ENCODE measurements at regions of chr1 and their contacts with region 1.

Region 1: GRCh38 chr1:40709100-40709801 is 17.7 kb downstream of the NFYC start:
- DNase-seq: peak; percentile 25 to 96 (median 84)
- H3K4me3 ChIP-seq: peak overlapping the region; percentile 36 to 79 (median 63)
- H3K27ac ChIP-seq: peak overlapping the region in 55 of 59 donors; percentile 5 to 87 (median 74)
- H3K27me3 ChIP-seq: no peaks in the 10 kb centered on the region
- CTCF ChIP-seq: peak in 5 of 56 donors; percentile 9 to 15 (median 13)

Region 2: DNA sequence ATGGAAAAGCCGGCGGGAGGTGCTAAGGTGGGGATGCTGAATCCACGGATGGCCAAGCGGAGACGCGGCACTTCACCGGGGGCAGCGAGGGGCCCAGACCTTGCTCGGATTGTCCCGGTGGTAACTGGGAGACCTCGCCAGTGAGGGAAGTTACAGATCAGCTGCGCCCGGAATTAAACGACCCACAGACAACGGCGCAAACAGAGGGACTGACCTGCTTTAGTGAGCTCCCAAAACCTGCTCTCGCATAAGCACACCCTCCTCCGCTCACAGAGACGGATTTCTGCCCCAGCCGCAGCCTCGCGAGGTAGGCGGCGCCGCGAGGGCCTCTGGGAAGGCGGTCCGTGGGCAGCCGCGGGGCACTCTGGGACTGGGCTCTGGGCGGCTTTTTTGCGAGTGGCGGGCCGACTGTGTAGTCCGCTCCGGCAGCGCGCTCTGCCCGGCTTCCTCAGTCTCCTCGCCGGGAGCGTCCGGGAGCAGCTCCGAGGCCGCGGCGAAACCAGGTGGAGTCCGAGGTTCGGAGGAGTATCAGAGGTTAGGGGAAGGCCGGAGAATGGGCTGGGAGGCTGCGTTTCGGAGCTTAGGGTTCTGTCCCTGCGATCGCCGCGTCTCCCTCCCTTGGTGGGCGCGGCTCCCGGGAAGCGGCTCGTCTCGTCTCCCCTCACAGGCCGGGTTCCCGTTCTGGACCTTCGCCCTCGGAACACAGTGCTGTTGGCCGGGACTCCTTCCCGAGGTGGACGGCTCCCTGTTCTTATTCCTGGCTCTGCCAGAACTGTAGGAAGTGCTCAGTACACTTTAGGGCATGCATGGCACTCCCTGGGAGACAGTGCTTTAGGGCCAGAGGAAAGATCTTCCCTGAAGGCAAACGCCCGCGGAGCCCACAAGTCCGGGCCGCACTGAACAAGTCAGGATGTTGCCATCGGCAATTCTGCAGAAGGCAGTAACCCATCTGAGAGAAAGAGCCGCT is 200.6 kb before region 1 on chr1 and contains the start of gene EXO5:
- intact Hi-C with region 1: no loop called
- DNase-seq: peak; percentile 55 to 89 (median 72)
- H3K4me3 ChIP-seq: peak within 1 kb of the TSS; percentile 55 to 97 (median 83)
- H3K27ac ChIP-seq: peak within 1 kb of the TSS in 39 of 59 donors; percentile 1 to 87 (median 51)
- H3K27me3 ChIP-seq: no peaks in the 10 kb centered on the region
- CTCF ChIP-seq: peak in 29 of 56 donors; percentile 8 to 52 (median 32)
- total RNA-seq, gene EXO5: 4.9 to 15.6 (median 9.1) TPM

Region 3: GRCh38 chr1:40691538-40692428 is 17.5 kb before region 1 on chr1 and contains the start of gene NFYC:
- intact Hi-C with region 1: loop called (anchors 2 kb)
- DNase-seq: peak; percentile 91 to 97 (median 94)
- H3K4me3 ChIP-seq: peak within 1 kb of the TSS; percentile 70 to 99 (median 91)
- H3K27ac ChIP-seq: peak within 1 kb of the TSS; percentile 96 to 100 (median 100)
- H3K27me3 ChIP-seq: no peaks in the 10 kb centered on the region
- CTCF ChIP-seq: peak in 29 of 56 donors; percentile 7 to 59 (median 28)
- total RNA-seq, gene NFYC: 44.5 to 77.9 (median 59.4) TPM

Region 4: GRCh38 chr1:40774266-40774998 is 65.2 kb after region 1 on chr1:
- intact Hi-C with region 1: no loop called
- DNase-seq: peak in 4 of 10 donors; percentile 38 to 51 (median 45)
- H3K4me3 ChIP-seq: no peak overlapping the region
- H3K27ac ChIP-seq: no peak overlapping the region
- H3K27me3 ChIP-seq: no peaks in the 10 kb centered on the region
- CTCF ChIP-seq: peak; percentile 39 to 83 (median 72)